ENCODE measurements at regions of chr13 and their contacts with region 1.

Region 1: DNA sequence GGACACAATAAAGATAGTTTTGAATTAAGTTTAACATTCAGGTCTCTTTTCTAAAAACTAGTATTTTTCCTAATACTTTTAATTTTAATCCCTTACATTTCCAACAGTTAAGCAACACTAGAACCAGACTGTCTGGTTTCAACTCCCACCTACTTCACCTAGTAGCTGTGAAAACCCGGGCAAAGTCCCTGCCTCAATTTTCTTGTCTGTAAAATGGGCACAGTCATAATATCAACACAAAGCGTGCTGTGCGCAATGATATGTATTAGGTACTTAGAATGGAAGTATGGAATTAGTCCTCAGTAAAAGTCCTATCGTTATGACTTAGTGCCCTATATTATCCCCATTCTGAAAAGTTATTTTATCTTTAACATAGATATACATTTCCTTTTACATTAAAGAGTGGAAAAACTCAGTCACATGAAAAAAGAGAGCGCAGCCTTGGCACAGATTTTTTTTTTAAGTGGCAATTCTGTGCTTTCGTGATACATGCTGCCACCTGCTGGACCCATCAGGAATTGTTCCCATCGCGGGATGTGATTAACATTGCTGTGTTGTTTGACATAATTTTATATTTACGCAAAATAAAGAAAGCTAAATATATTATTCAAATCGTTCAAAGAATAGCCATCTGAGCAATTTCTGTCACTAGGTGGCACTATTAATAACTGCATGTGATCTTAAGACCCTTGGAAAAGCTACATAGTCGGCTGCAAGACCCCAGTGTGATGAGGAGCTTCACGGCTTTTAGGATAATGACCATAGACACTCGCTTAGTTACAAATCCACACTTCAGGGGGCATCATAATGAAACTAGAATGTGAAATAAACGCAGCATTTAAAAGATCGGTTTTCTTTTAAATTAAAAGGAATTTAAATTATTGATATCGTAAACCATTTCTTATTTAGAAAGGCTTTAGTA is 59.9 kb downstream of the LIG4 start:
- DNase-seq: peak; percentile 46
- H3K4me3 Mint-ChIP-seq: no peak overlapping the region
- H3K27ac Mint-ChIP-seq: no peak overlapping the region
- H3K4me1 Mint-ChIP-seq: no peaks in the 10 kb centered on the region
- H3K27me3 Mint-ChIP-seq: no peaks in the 10 kb centered on the region

Region 2: GRCh38 chr13:108087810-108088209 is 67.6 kb before region 1 on chr13:
- CTCF ChIA-PET with region 1: no interaction called
- POLR2A ChIA-PET with region 1: no interaction called
- DNase-seq: no peak
- H3K4me3 Mint-ChIP-seq: no peak overlapping the region
- H3K27ac Mint-ChIP-seq: no peak overlapping the region
- H3K4me1 Mint-ChIP-seq: no peaks in the 10 kb centered on the region
- H3K27me3 Mint-ChIP-seq: no peaks in the 10 kb centered on the region

Region 3: GRCh38 chr13:108137176-108137575 is 18.3 kb before region 1 on chr13:
- CTCF ChIA-PET with region 1: interaction called, 10 read pairs
- POLR2A ChIA-PET with region 1: no interaction called
- DNase-seq: no peak
- H3K4me3 Mint-ChIP-seq: no peak overlapping the region
- H3K27ac Mint-ChIP-seq: no peak overlapping the region
- H3K4me1 Mint-ChIP-seq: no peaks in the 10 kb centered on the region
- H3K27me3 Mint-ChIP-seq: peaks cover 2% of the 10 kb centered on the region

Region 4: GRCh38 chr13:108166078-108166477 is 10.6 kb after region 1 on chr13:
- CTCF ChIA-PET with region 1: interaction called, 12 read pairs
- POLR2A ChIA-PET with region 1: no interaction called
- DNase-seq: no peak
- H3K4me3 Mint-ChIP-seq: no peak overlapping the region
- H3K27ac Mint-ChIP-seq: no peak overlapping the region
- H3K4me1 Mint-ChIP-seq: no peaks in the 10 kb centered on the region
- H3K27me3 Mint-ChIP-seq: peaks cover under 1% of the 10 kb centered on the region

Region 5: GRCh38 chr13:108200781-108201398 is 45.4 kb after region 1 on chr13:
- CTCF ChIA-PET with region 1: no interaction called
- POLR2A ChIA-PET with region 1: no interaction called
- DNase-seq: no peak
- H3K4me3 Mint-ChIP-seq: no peak overlapping the region
- H3K27ac Mint-ChIP-seq: no peak overlapping the region
- H3K4me1 Mint-ChIP-seq: peaks cover 27% of the 10 kb centered on the region
- H3K27me3 Mint-ChIP-seq: peaks cover 10% of the 10 kb centered on the region

Region 6: GRCh38 chr13:108889324-108889984 is 734.0 kb after region 1 on chr13:
- CTCF ChIA-PET with region 1: no interaction called
- POLR2A ChIA-PET with region 1: no interaction called
- DNase-seq: no peak
- H3K4me3 Mint-ChIP-seq: no peak overlapping the region
- H3K27ac Mint-ChIP-seq: no peak overlapping the region
- H3K4me1 Mint-ChIP-seq: no peaks in the 10 kb centered on the region
- H3K27me3 Mint-ChIP-seq: no peaks in the 10 kb centered on the region